K562 (cell line): ENCODE measurements at regions of chr14 and their contacts with region 1.

Region 1: DNA sequence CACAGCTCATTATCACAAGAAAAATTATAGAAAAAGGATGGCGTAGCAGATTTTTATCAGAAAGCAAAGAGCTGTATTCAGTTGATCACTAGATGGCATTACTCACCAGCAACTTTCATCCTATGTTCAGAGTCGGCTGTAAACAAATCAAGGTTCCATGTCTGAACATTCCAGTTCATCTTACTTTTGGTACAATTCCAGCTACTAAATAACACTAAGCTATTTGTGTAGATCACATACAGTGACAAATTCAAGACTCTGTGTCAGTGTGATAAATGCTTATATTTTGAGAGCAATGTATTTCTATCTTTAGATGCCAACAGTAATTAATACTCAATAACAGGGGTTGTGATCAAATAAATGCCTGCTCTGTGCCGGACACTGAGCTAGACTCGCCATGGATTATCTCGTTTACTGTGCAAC is 30.1 kb downstream of the NRDE2 start:
- DNase-seq: peak in 1 of 4 experiments; percentile 6
- ATAC-seq: peak; percentile 53; the same call in 2 of the 3 replicates
- H3K4me3 ChIP-seq: no peak overlapping the region
- H3K27ac ChIP-seq: no peak overlapping the region
- H3K4me1 ChIP-seq: peaks cover 0 to 7% of the 10 kb centered on the region in 2 experiments; a peak in 2 of 5 replicates
- H3K27me3 ChIP-seq: no peaks in the 10 kb centered on the region
- CTCF ChIP-seq: peak in 2 of 3 experiments; percentile 25 to 51; a peak in 2 of 6 replicates
- EP300 ChIP-seq: no peak
- POLR2A ChIP-seq: no peak
- RAD21 ChIP-seq: peak; percentile 51 to 64

Region 2: GRCh38 chr14:90168425-90169105 is 133.1 kb before region 1 on chr14:
- CTCF ChIA-PET with region 1: no interaction called
- POLR2A ChIA-PET with region 1: no interaction called
- in situ Hi-C with region 1: no loop called
- intact Hi-C with region 1: no loop called
- DNase-seq: no peak
- ATAC-seq: no peak
- H3K4me3 ChIP-seq: no peak overlapping the region
- H3K27ac ChIP-seq: no peak overlapping the region
- H3K4me1 ChIP-seq: no peaks in the 10 kb centered on the region
- H3K27me3 ChIP-seq: no peaks in the 10 kb centered on the region
- CTCF ChIP-seq: no peak
- EP300 ChIP-seq: no peak
- POLR2A ChIP-seq: no peak
- RAD21 ChIP-seq: no peak

Region 3: GRCh38 chr14:90419200-90419599 is 117.5 kb after region 1 on chr14:
- CTCF ChIA-PET with region 1: no interaction called
- POLR2A ChIA-PET with region 1: no interaction called
- in situ Hi-C with region 1: no loop called
- intact Hi-C with region 1: no loop called
- DNase-seq: peak in 1 of 4 experiments; percentile 6
- ATAC-seq: no peak
- H3K4me3 ChIP-seq: no peak overlapping the region
- H3K27ac ChIP-seq: no peak overlapping the region
- H3K4me1 ChIP-seq: no peaks in the 10 kb centered on the region
- H3K27me3 ChIP-seq: peaks cover 0 to 5% of the 10 kb centered on the region in 2 experiments; a peak in 2 of 5 replicates
- CTCF ChIP-seq: no peak
- EP300 ChIP-seq: no peak
- POLR2A ChIP-seq: no peak
- RAD21 ChIP-seq: no peak

Region 4: DNA sequence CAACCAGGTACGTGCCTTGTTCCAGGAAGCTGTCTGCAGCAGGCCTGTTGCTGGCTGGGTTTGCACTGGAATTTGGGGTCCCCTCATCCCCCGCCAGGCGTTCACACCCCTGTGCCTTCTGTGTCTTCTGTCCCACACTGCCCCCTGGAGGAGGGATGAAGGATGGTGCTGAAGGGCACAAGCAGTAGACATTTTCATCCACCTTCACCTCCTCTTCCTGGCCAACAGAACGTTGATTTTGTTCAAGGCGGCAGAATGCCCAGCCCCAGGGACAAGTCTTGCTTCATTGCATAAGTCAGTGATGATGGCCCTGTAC is 217.2 kb after region 1 on chr14:
- CTCF ChIA-PET with region 1: no interaction called
- POLR2A ChIA-PET with region 1: interaction called, 4 read pairs
- in situ Hi-C with region 1: no loop called
- intact Hi-C with region 1: loop called (anchors 5 kb)
- DNase-seq: peak; percentile 65 to 66 (median 65)
- ATAC-seq: peak; percentile 86
- H3K4me3 ChIP-seq: no peak overlapping the region
- H3K27ac ChIP-seq: no peak overlapping the region
- H3K4me1 ChIP-seq: peaks cover 7 to 26% of the 10 kb centered on the region in 2 experiments
- H3K27me3 ChIP-seq: no peaks in the 10 kb centered on the region
- CTCF ChIP-seq: peak; percentile 62 to 76 (median 62)
- EP300 ChIP-seq: no peak
- POLR2A ChIP-seq: no peak
- RAD21 ChIP-seq: peak; percentile 47 to 65; a peak in 2 of 4 replicates

Region 5: GRCh38 chr14:90697577-90698206 is 396.0 kb after region 1 on chr14:
- CTCF ChIA-PET with region 1: interaction called, 4 read pairs
- POLR2A ChIA-PET with region 1: no interaction called
- in situ Hi-C with region 1: no loop called
- intact Hi-C with region 1: loop called (anchors 5 kb)
- DNase-seq: peak; percentile 71 to 75 (median 72)
- ATAC-seq: peak; percentile 98
- H3K4me3 ChIP-seq: no peak overlapping the region
- H3K27ac ChIP-seq: no peak overlapping the region
- H3K4me1 ChIP-seq: peaks cover 0 to 2% of the 10 kb centered on the region in 2 experiments; a peak in 2 of 5 replicates
- H3K27me3 ChIP-seq: no peaks in the 10 kb centered on the region
- CTCF ChIP-seq: peak; percentile 72 to 81 (median 78)
- EP300 ChIP-seq: no peak
- POLR2A ChIP-seq: no peak
- RAD21 ChIP-seq: peak; percentile 68 to 77